Heart right ventricle (tissue), 16 donors: ENCODE measurements at regions of chr7 and their contacts with region 1.

Region 1: GRCh38 chr7:111841596-111842205 is 279.4 kb upstream of the IMMP2L start:
- DNase-seq: no peak
- ATAC-seq: no peak
- H3K4me3 ChIP-seq: no peak overlapping the region
- H3K27ac ChIP-seq: no peak overlapping the region
- H3K4me1 ChIP-seq: peaks cover 0 to 6% (median 0%) of the 10 kb centered on the region in 9 donors
- H3K27me3 ChIP-seq: no peaks in the 10 kb centered on the region
- CTCF ChIP-seq: no peak

Region 2: DNA sequence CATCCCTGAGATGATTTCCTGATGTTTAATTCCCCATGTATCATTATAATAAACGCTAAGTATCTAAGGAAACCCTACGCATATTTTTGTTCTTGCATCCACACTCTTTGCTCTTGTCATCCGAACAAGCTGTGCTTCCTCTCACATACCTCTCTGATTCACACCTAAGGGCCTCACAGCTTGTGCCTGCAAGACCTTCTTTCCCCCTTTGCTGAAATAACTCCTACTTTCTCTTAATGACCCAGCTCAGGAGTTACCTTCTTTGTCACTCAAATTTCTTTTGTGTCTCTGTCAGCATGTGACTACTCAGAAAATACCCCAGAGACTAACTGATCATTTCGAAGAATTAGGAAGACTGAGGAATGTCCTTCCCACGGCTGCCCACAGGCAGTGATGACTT is 70.1 kb before region 1 on chr7:
- intact Hi-C with region 1: loop called in 1 of 10 experiments (anchors 10 kb)
- DNase-seq: no peak
- ATAC-seq: no peak
- H3K4me3 ChIP-seq: no peak overlapping the region
- H3K27ac ChIP-seq: no peak overlapping the region
- H3K4me1 ChIP-seq: no peaks in the 10 kb centered on the region
- H3K27me3 ChIP-seq: no peaks in the 10 kb centered on the region
- CTCF ChIP-seq: no peak

Region 3: GRCh38 chr7:111892588-111892987 is 50.9 kb after region 1 on chr7:
- intact Hi-C with region 1: no loop called
- DNase-seq: no peak
- ATAC-seq: no peak
- H3K4me3 ChIP-seq: no peak overlapping the region
- H3K27ac ChIP-seq: no peak overlapping the region
- H3K4me1 ChIP-seq: peaks cover 0 to 7% (median 0%) of the 10 kb centered on the region in 9 donors
- H3K27me3 ChIP-seq: no peaks in the 10 kb centered on the region
- CTCF ChIP-seq: no peak

Region 4: DNA sequence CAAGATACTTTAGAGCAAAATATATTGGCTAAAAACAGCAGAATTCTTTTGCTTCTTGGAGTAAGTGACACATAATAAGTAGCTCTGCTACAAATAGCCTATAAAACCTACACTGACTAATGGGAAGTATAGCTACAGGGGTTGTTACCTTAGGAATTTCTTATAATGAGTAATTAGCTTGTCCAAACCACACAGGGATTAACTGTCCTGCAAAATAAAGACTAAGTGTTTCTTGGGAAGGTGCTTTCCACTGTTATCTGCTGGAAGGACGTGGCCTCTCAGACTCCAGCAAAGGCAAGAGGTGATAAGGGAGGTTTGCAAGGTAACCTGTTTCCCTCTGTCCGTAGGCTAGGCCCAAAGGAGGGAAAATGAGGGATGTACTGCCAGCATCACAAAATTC is 62.1 kb after region 1 on chr7:
- intact Hi-C with region 1: loop called in 1 of 10 experiments (anchors 10 kb)
- DNase-seq: no peak
- ATAC-seq: no peak
- H3K4me3 ChIP-seq: no peak overlapping the region
- H3K27ac ChIP-seq: no peak overlapping the region
- H3K4me1 ChIP-seq: no peaks in the 10 kb centered on the region
- H3K27me3 ChIP-seq: no peaks in the 10 kb centered on the region
- CTCF ChIP-seq: no peak

Region 5: GRCh38 chr7:111958896-111959295 is 117.2 kb after region 1 on chr7:
- intact Hi-C with region 1: no loop called
- DNase-seq: no peak
- ATAC-seq: no peak
- H3K4me3 ChIP-seq: no peak overlapping the region
- H3K27ac ChIP-seq: no peak overlapping the region
- H3K4me1 ChIP-seq: peaks cover 2 to 50% (median 39%) of the 10 kb centered on the region in 9 donors
- H3K27me3 ChIP-seq: no peaks in the 10 kb centered on the region
- CTCF ChIP-seq: no peak